ENCODE measurements at regions of chr11 and their contacts with region 1.

Region 1: GRCh38 chr11:108278546-108278945 is 55.7 kb downstream of the ATM start:
- DNase-seq: no peak
- ATAC-seq: no peak
- H3K4me3 ChIP-seq: no peak overlapping the region
- H3K4me3 Mint-ChIP-seq: peak overlapping the region in 8 of 10 donors; percentile 1 to 68 (median 46)
- H3K27ac ChIP-seq: peak overlapping the region; percentile 37
- H3K27ac Mint-ChIP-seq: peak overlapping the region in 8 of 9 donors; percentile 5 to 90 (median 86)
- H3K4me1 ChIP-seq: peaks cover 0 to 42% of the 10 kb centered on the region in 2 donors
- H3K4me1 Mint-ChIP-seq: peaks cover 25 to 85% (median 79%) of the 10 kb centered on the region in 7 donors
- H3K27me3 ChIP-seq: no peaks in the 10 kb centered on the region
- H3K27me3 Mint-ChIP-seq: no peaks in the 10 kb centered on the region

Region 2: DNA sequence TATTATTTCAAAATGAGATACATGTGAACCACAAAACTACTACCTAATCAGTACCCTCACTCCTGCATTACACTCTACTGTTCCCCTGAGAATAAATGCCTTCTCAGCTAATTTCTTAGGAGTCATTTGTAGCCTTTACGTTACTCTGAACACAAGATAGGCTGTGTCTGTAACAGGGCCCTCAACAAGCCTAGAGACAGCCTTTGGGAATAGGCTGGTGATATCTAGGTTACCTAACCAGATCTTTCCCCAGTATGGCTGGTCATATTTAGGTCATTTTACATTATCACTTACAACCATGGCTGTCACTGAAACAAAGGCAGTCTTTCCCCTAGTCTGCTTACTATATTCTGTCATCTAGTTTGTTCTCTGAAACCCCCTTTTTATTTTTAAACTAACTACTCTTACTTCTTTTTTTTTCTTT is 41.5 kb before region 1 on chr11:
- CTCF ChIA-PET with region 1: interaction called, 4 read pairs
- POLR2A ChIA-PET with region 1: interaction called, 12 read pairs
- intact Hi-C with region 1: no loop called
- DNase-seq: peak in 4 of 9 donors; percentile 31 to 63 (median 50)
- ATAC-seq: peak; percentile 51
- H3K4me3 ChIP-seq: peak overlapping the region; percentile 50
- H3K4me3 Mint-ChIP-seq: peak overlapping the region in 9 of 10 donors; percentile 54 to 89 (median 82)
- H3K27ac ChIP-seq: peak overlapping the region; percentile 74
- H3K27ac Mint-ChIP-seq: peak overlapping the region in 7 of 9 donors; percentile 81 to 97 (median 95)
- H3K4me1 ChIP-seq: peaks cover 75 to 94% of the 10 kb centered on the region in 2 donors
- H3K4me1 Mint-ChIP-seq: peaks cover 53 to 95% (median 79%) of the 10 kb centered on the region in 7 donors
- H3K27me3 ChIP-seq: no peaks in the 10 kb centered on the region
- H3K27me3 Mint-ChIP-seq: no peaks in the 10 kb centered on the region